H1 (cell line): ENCODE measurements at regions of chr4 and their contacts with region 1.

Region 1: GRCh38 chr4:26081795-26082498 is 167.9 kb downstream of the SMIM20 start:
- DNase-seq: no peak
- H3K4me3 ChIP-seq: no peak overlapping the region
- H3K27ac ChIP-seq: no peak overlapping the region
- H3K4me1 ChIP-seq: peaks cover 0 to 4% (median 0%) of the 10 kb centered on the region in 4 experiments; a peak in 2 of 7 replicates
- H3K27me3 ChIP-seq: no peaks in the 10 kb centered on the region
- CTCF ChIP-seq: peak in 2 of 3 experiments; percentile 39 to 67; a peak in 2 of 4 replicates
- EP300 ChIP-seq: no peak
- POLR2A ChIP-seq: no peak
- RAD21 ChIP-seq: peak; percentile 68 to 70

Region 2: GRCh38 chr4:26022346-26023202 is 59.4 kb before region 1 on chr4:
- CTCF ChIA-PET with region 1: no interaction called
- POLR2A ChIA-PET with region 1: no interaction called
- DNase-seq: no peak
- H3K4me3 ChIP-seq: no peak overlapping the region
- H3K27ac ChIP-seq: no peak overlapping the region
- H3K4me1 ChIP-seq: 0 out of 7 replicates have a peak, but pooled peaks cover 0 to 2% (median 0%) of the 10 kb centered on the region in 4 experiments
- H3K27me3 ChIP-seq: no peaks in the 10 kb centered on the region
- CTCF ChIP-seq: no peak
- EP300 ChIP-seq: no peak
- POLR2A ChIP-seq: no peak
- RAD21 ChIP-seq: no peak

Region 3: GRCh38 chr4:26061248-26061986 is 20.5 kb before region 1 on chr4:
- CTCF ChIA-PET with region 1: interaction called, 54 read pairs
- POLR2A ChIA-PET with region 1: no interaction called
- DNase-seq: peak; percentile 25 to 53
- H3K4me3 ChIP-seq: no peak overlapping the region
- H3K27ac ChIP-seq: no peak overlapping the region
- H3K4me1 ChIP-seq: no peaks in the 10 kb centered on the region
- H3K27me3 ChIP-seq: no peaks in the 10 kb centered on the region
- CTCF ChIP-seq: peak; percentile 77 to 95 (median 81)
- EP300 ChIP-seq: no peak
- POLR2A ChIP-seq: no peak
- RAD21 ChIP-seq: peak; percentile 87 to 92

Region 4: DNA sequence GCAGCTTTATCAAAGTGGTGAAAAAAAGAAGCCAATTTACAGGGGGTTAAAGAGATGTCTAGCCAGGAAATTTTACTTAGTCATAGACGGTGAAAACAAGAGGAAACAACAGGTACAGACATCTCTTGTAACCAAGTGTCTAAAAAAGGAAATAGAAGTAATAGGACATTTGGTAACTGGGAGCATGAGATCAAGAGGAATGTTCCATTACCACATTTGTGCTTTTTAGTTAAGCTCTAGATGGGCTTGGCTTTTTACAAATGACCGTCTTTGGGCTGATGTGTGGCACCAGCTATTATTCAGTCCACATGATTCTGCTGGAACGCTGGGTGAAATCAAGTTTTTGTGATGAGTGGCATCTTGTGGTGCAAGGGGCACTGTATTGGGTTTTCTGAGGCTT is 11.6 kb after region 1 on chr4:
- CTCF ChIA-PET with region 1: interaction called, 27 read pairs
- POLR2A ChIA-PET with region 1: no interaction called
- DNase-seq: no peak
- H3K4me3 ChIP-seq: no peak overlapping the region
- H3K27ac ChIP-seq: no peak overlapping the region
- H3K4me1 ChIP-seq: no peaks in the 10 kb centered on the region
- H3K27me3 ChIP-seq: no peaks in the 10 kb centered on the region
- CTCF ChIP-seq: no peak
- EP300 ChIP-seq: no peak
- POLR2A ChIP-seq: no peak
- RAD21 ChIP-seq: no peak

Region 5: GRCh38 chr4:26161030-26161824 is 79.3 kb after region 1 on chr4:
- CTCF ChIA-PET with region 1: interaction called, 17 read pairs
- POLR2A ChIA-PET with region 1: no interaction called
- DNase-seq: no peak
- H3K4me3 ChIP-seq: no peak overlapping the region
- H3K27ac ChIP-seq: no peak overlapping the region
- H3K4me1 ChIP-seq: peaks cover 0 to 2% (median 0%) of the 10 kb centered on the region in 4 experiments; a peak in 2 of 7 replicates
- H3K27me3 ChIP-seq: no peaks in the 10 kb centered on the region
- CTCF ChIP-seq: peak; percentile 22 to 60 (median 57)
- EP300 ChIP-seq: no peak
- POLR2A ChIP-seq: no peak
- RAD21 ChIP-seq: peak; percentile 61 to 70